Activated CD8-positive, alpha-beta memory T cell treated with anti-CD3 and anti-CD28 coated beads, Interleukin-2, amount 10 ng/mL, durations not matched to agents 7 days and 5 days (primary cell): ENCODE measurements at regions of chr5 and their contacts with region 1.

Region 1: GRCh38 chr5:15003511-15003920 is 131.9 kb upstream of the ANKH start:
- DNase-seq: peak; percentile 68
- ATAC-seq: peak; percentile 94
- H3K4me3 Mint-ChIP-seq: no peak overlapping the region
- H3K27ac Mint-ChIP-seq: no peak overlapping the region
- H3K4me1 Mint-ChIP-seq: peaks cover 10% of the 10 kb centered on the region
- H3K27me3 Mint-ChIP-seq: peaks cover 49% of the 10 kb centered on the region

Region 2: DNA sequence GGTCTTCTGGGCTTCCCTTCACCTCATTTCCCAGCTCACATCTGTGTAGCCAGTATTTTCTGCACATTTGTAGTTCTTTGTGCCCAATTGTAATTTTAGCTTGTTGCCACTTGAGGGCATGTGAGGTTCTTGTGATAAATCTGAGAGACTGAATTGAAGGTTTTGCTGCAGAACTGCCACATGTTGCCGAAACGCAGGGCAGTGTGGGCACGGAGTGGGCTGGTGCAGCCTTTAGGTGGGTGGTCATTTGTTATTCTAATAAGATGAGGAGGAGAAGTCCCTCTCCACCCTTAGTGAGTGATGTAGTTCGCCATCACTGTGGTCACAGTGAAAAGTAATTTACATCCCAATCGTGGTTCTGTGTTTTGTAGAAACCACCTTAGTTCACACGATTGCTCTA is 317.8 kb before region 1 on chr5:
- CTCF ChIA-PET with region 1: interaction called, 20 read pairs
- DNase-seq: peak; percentile 63
- ATAC-seq: peak; percentile 80
- H3K4me3 Mint-ChIP-seq: peak overlapping the region; percentile 49
- H3K27ac Mint-ChIP-seq: peak overlapping the region; percentile 82
- H3K4me1 Mint-ChIP-seq: peaks cover 22% of the 10 kb centered on the region
- H3K27me3 Mint-ChIP-seq: no peaks in the 10 kb centered on the region

Region 3: DNA sequence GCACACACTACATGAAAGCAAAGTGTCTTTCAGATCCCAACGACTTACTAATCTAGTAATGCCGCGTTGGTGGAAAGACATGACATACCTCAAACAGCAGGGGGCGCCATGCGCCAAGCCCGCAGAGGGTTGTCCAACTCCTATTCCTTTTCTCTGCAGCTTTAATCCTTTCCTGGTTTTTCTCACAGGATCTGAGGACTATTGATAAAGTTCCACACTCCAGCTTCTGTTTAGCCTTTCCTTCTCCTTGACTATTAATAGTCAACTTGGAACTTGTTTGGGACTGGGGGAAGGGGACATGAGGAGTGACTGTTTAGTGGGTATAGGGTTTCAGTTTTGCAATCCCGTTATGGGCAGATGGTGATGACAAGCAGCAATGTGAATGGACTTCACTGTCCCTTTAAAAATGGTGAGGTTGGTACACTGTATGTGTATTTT is 276.1 kb before region 1 on chr5:
- CTCF ChIA-PET with region 1: interaction called, 61 read pairs
- DNase-seq: peak; percentile 78
- ATAC-seq: peak; percentile 78
- H3K4me3 Mint-ChIP-seq: no peak overlapping the region
- H3K27ac Mint-ChIP-seq: no peak overlapping the region
- H3K4me1 Mint-ChIP-seq: peaks cover 4% of the 10 kb centered on the region
- H3K27me3 Mint-ChIP-seq: no peaks in the 10 kb centered on the region

Region 4: GRCh38 chr5:14871210-14872069 is 132.1 kb before region 1 on chr5 and contains the start of gene ANKH:
- CTCF ChIA-PET with region 1: interaction called, 18 read pairs
- DNase-seq: peak; percentile 83
- ATAC-seq: peak; percentile 93
- H3K4me3 Mint-ChIP-seq: peak within 1 kb of the TSS; percentile 77
- H3K27ac Mint-ChIP-seq: peak within 1 kb of the TSS; percentile 81
- H3K4me1 Mint-ChIP-seq: peaks cover 25% of the 10 kb centered on the region
- H3K27me3 Mint-ChIP-seq: peaks cover 7% of the 10 kb centered on the region
- total RNA-seq, gene ANKH: 31.3 to 41.9 TPM

Region 5: DNA sequence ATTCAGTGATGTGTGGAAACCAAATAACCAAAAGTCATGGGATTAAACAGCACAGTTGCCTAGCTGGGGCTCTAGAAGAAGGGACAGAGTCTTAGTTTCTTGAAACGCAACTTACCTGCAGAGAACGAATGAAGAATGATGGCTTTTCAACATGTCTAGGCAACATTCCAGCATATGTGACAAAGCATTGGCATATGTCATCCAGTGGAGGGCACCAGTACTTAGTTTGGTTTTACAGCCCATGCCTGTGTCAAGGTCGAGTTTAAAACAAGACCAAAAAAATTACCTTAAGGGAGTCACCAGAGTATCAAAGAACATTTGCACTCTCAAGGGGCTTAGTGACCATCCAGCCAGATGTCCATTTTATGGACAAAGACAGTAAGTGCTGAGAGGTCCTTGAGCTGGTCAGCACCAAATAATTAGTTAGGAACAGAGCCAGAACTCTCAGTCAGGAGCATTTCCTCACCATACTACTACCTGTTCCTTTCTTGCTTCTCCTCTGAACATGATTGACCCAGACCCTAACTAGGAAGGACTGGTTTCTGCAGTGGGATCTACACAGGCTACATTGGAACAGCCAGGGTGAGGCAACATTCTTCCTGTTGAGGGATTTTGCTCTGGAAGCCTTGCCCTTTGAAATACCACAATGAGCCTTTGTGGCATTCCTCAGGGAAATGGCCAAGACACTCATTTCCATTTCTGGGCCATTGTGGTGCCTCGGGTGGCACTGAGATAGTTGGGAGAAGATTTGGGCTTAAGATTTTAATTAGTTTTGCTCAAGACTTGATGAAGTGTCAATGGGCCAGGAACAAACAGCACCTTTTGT is 56.5 kb before region 1 on chr5:
- CTCF ChIA-PET with region 1: interaction called, 18 read pairs
- DNase-seq: no peak
- ATAC-seq: peak; percentile 85
- H3K4me3 Mint-ChIP-seq: no peak overlapping the region
- H3K27ac Mint-ChIP-seq: no peak overlapping the region
- H3K4me1 Mint-ChIP-seq: peaks cover 5% of the 10 kb centered on the region
- H3K27me3 Mint-ChIP-seq: peaks cover 11% of the 10 kb centered on the region